Natural killer cell (primary cell): ENCODE measurements at regions of chr12 and their contacts with region 1.

Region 1: GRCh38 chr12:89352492-89353187 is at the start of gene DUSP6:
- DNase-seq: peak; percentile 83 to 89
- ATAC-seq: peak; percentile 67 to 85 (median 73)
- H3K4me3 ChIP-seq: peak within 1 kb of the TSS; percentile 89
- H3K4me3 Mint-ChIP-seq: peak within 1 kb of the TSS; percentile 98
- H3K27ac ChIP-seq: peak within 1 kb of the TSS; percentile 90
- H3K27ac Mint-ChIP-seq: peak within 1 kb of the TSS; percentile 93 to 95
- H3K4me1 ChIP-seq: peaks cover 40% of the 10 kb centered on the region
- H3K4me1 Mint-ChIP-seq: peaks cover 58 to 74% of the 10 kb centered on the region in 2 donors
- H3K27me3 ChIP-seq: no peaks in the 10 kb centered on the region
- H3K27me3 Mint-ChIP-seq: no peaks in the 10 kb centered on the region
- CTCF ChIP-seq: no peak
- total RNA-seq, gene DUSP6: 52.2 to 222 (median 141) TPM

Region 2: GRCh38 chr12:89040146-89040964 is 312.3 kb before region 1 on chr12:
- intact Hi-C with region 1: loop called (anchors 5 kb)
- DNase-seq: peak in 1 of 2 donors; percentile 74
- ATAC-seq: peak; percentile 86 to 87 (median 86)
- H3K4me3 ChIP-seq: no peak overlapping the region
- H3K4me3 Mint-ChIP-seq: peak overlapping the region; percentile 21
- H3K27ac ChIP-seq: peak overlapping the region; percentile 49
- H3K27ac Mint-ChIP-seq: peak overlapping the region; percentile 11 to 73
- H3K4me1 ChIP-seq: peaks cover 15% of the 10 kb centered on the region
- H3K4me1 Mint-ChIP-seq: peaks cover 28 to 36% of the 10 kb centered on the region in 2 donors
- H3K27me3 ChIP-seq: no peaks in the 10 kb centered on the region
- H3K27me3 Mint-ChIP-seq: no peaks in the 10 kb centered on the region
- CTCF ChIP-seq: no peak

Region 3: GRCh38 chr12:89280833-89281538 is 71.7 kb before region 1 on chr12:
- intact Hi-C with region 1: loop called (anchors 5 kb)
- DNase-seq: peak in 1 of 2 donors; percentile 54
- ATAC-seq: peak; percentile 92 to 94 (median 93)
- H3K4me3 ChIP-seq: no peak overlapping the region
- H3K4me3 Mint-ChIP-seq: peak overlapping the region; percentile 69
- H3K27ac ChIP-seq: peak overlapping the region; percentile 74
- H3K27ac Mint-ChIP-seq: peak overlapping the region; percentile 85 to 90
- H3K4me1 ChIP-seq: peaks cover 9% of the 10 kb centered on the region
- H3K4me1 Mint-ChIP-seq: peaks cover 32 to 37% of the 10 kb centered on the region in 2 donors
- H3K27me3 ChIP-seq: no peaks in the 10 kb centered on the region
- H3K27me3 Mint-ChIP-seq: no peaks in the 10 kb centered on the region
- CTCF ChIP-seq: no peak

Region 4: GRCh38 chr12:89373763-89374572 is 21.3 kb after region 1 on chr12:
- intact Hi-C with region 1: loop called (anchors 1 kb)
- DNase-seq: no peak
- ATAC-seq: no peak
- H3K4me3 ChIP-seq: no peak overlapping the region
- H3K4me3 Mint-ChIP-seq: no peak overlapping the region
- H3K27ac ChIP-seq: no peak overlapping the region
- H3K27ac Mint-ChIP-seq: no peak overlapping the region
- H3K4me1 ChIP-seq: peaks cover 11% of the 10 kb centered on the region
- H3K4me1 Mint-ChIP-seq: peaks cover 24 to 27% of the 10 kb centered on the region in 2 donors
- H3K27me3 ChIP-seq: no peaks in the 10 kb centered on the region
- H3K27me3 Mint-ChIP-seq: no peaks in the 10 kb centered on the region
- CTCF ChIP-seq: no peak

Region 5: GRCh38 chr12:89524541-89525285 is 172.1 kb after region 1 on chr12 and contains the start of gene GALNT4:
- intact Hi-C with region 1: loop called (anchors 2 kb)
- DNase-seq: peak; percentile 65 to 87
- ATAC-seq: peak; percentile 64 to 81 (median 75)
- H3K4me3 ChIP-seq: peak within 1 kb of the TSS; percentile 100
- H3K4me3 Mint-ChIP-seq: peak within 1 kb of the TSS; percentile 96
- H3K27ac ChIP-seq: peak within 1 kb of the TSS; percentile 96
- H3K27ac Mint-ChIP-seq: peak within 1 kb of the TSS; percentile 86 to 93
- H3K4me1 ChIP-seq: peaks cover 25% of the 10 kb centered on the region
- H3K4me1 Mint-ChIP-seq: peaks cover 45 to 46% of the 10 kb centered on the region in 2 donors
- H3K27me3 ChIP-seq: no peaks in the 10 kb centered on the region
- H3K27me3 Mint-ChIP-seq: no peaks in the 10 kb centered on the region
- CTCF ChIP-seq: peak; percentile 57
- total RNA-seq, gene GALNT4: 14.3 to 19.9 (median 18.7) TPM